GM18951 (cell line): ENCODE measurements at regions of chr5 and their contacts with region 1.

Region 1: DNA sequence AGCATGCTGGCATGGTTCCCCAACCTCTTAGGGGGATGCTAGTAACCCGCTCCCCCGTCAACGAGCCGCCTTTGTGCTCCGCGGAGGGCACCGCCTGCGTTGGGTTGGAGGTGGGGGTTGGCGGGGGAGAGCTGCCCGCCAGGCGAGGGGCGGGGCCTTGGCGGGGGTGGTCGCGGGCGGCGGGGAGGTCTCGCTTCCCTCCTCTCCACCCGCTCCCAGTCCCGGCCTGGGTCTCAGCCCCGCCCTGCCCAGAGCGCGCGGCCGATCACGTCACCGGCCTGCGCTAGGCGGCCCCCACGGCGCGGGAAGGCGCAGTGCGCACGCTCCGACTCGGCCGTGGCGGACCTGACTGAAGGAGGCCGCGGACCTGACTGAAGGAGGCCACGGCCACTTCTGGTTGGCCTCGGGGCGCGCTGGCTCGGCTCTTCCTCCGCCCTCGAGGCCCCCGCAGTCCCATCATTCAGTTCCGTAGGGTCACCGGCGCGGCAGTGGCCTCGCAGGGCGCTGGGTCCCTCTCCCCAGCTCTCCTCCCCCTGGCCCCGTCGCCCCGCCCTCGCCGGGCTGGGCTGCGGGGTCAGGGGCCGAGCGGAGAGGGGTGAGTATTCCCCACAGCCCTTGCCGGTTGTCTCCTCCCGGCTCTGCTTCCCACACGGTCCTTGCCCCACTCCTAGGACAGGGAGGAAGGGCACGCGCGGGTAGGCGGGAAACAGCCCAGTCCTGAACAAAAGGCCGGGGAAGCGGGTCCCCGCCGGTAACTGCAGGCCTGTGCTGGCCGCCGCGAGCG is at the start of gene ATG10:
- POLR2A ChIP-seq: peak; percentile 89

Region 2: GRCh38 chr5:81409896-81410295 is 562.0 kb before region 1 on chr5:
- in situ Hi-C with region 1: loop called (anchors 10 kb)
- POLR2A ChIP-seq: no peak